BJ (cell line): ENCODE measurements at regions of chr18 and their contacts with region 1.

Region 1: DNA sequence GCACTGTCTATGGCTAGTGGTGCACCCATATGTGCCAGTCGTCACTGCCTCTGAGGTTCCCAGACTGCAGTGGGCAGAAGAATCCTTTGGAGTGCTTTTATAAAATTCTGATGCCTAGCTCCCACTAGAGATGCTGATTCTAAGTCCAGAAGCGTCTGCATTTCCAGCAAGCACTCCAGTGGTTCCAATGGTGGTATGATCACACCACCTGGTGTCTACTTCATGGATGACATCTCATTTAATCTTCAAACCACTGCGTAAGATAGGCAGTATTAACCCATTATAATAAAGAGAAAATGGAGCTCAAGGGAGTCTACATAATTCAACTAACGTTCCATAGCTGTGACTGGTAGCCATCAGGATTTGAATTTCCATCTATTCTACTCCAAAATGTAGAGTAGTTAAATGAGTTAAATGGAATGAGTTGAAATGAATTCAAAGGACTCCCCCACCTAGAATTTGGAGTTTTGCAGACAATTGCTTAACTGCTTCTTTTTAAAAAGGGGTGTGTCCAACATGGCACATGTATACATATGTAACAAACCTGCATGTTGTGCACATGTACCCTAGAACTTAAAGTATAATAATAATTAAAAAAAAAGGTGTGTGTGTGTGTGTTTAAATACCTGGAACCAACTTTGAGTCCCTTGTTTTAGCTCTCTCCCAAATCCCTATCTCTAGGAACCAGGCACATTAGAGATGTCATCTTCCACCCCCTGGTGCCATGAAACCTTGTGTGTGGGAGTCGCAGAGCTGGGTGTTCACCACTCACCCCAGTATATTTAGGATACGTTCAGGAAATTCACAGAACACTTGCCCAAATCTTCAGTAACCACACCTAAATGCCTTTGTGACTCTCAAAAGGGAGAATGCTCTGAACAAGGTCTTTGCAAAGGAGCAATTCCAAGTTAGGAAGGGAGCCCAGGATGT is 14.1 kb downstream of the LAMA3 start:
- DNase-seq: no peak
- H3K4me3 ChIP-seq: no peak overlapping the region
- H3K27me3 ChIP-seq: no peaks in the 10 kb centered on the region; the same call in 1 of the 2 replicates
- CTCF ChIP-seq: peak; percentile 62

Region 2: DNA sequence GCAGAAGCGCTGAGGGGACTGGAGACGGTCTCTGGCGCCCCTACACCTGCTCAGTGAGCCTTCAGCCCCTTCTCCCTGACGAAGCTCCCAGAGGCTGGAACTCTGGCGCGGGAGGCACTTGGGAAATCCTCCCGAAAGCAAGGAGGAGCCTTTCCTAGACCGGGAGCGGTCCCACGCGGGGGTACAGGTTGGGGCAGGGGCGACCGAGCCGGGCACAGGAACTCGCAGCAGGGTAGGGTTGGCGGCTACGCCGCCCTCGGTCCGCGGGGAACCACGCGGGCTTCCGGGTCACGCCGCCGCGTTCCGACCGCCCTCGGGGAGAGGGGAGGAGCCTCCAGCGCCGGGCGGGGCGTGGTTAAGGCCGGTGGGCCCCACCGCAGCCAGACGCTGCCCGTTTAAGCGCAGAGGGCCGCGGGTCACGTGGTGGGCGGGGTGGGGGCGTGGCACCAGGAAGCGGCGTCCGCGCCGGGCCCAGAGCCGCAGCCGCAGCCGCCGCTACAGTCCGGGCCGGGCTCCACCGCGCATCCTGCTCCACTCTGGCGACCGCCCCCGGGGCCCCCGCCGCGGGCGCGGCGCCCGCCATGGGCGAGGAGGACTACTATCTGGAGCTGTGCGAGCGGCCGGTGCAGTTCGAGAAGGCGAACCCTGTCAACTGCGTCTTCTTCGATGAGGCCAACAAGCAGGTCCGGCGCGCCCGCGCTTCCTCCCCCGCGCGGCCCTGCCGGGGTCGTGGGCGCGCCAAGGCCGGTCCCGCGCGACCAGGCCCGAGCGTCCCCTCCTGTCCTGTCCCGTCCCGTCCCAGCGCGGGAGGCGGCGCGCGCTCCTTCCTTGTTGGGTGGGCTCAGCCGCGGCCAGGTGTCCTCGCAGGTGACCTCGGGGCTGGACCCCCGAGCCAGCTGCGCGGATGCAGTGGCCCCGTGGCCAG is 200.0 kb before region 1 on chr18 and contains the start of gene RMC1:
- CTCF ChIA-PET with region 1: interaction called, 45 read pairs
- POLR2A ChIA-PET with region 1: no interaction called
- DNase-seq: no peak
- H3K4me3 ChIP-seq: peak within 1 kb of the TSS; percentile 91
- H3K27me3 ChIP-seq: no peaks in the 10 kb centered on the region
- CTCF ChIP-seq: no peak
- polyA plus RNA-seq, gene RMC1: 10.8 and 15.1 TPM in 2 replicates

Region 3: DNA sequence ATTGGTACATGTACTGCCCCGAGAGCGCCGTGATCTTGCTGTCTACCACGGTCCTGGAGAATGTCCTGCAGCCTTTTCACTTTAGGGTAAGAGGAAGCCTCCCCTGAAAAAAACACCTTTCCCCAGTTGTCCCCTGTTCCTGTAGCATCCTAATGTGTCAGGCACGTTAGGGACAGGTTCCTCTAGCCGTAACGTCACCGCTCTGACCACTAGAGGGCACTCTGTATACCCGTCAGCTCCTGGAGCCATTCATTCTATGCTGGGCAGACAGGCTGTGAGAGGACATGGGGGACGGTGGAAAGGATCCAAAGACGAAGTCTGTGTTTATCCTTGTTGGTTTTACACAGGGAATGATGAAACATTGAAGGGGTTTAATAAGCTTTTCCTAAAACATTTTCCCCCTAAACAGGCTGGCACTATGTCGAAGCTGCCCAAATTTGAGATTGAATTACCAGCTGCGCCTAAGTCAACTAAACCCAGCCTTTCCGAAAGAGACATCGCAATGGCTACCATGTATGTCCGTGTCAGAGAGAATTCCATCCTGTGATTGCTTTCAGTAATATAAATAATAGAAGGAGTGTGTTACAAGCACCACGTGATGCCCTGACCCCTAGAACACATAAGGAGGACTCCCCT is 187.3 kb before region 1 on chr18:
- CTCF ChIA-PET with region 1: interaction called, 24 read pairs
- POLR2A ChIA-PET with region 1: no interaction called
- DNase-seq: no peak
- H3K4me3 ChIP-seq: no peak overlapping the region
- H3K27me3 ChIP-seq: no peaks in the 10 kb centered on the region
- CTCF ChIP-seq: peak; percentile 95

Region 4: DNA sequence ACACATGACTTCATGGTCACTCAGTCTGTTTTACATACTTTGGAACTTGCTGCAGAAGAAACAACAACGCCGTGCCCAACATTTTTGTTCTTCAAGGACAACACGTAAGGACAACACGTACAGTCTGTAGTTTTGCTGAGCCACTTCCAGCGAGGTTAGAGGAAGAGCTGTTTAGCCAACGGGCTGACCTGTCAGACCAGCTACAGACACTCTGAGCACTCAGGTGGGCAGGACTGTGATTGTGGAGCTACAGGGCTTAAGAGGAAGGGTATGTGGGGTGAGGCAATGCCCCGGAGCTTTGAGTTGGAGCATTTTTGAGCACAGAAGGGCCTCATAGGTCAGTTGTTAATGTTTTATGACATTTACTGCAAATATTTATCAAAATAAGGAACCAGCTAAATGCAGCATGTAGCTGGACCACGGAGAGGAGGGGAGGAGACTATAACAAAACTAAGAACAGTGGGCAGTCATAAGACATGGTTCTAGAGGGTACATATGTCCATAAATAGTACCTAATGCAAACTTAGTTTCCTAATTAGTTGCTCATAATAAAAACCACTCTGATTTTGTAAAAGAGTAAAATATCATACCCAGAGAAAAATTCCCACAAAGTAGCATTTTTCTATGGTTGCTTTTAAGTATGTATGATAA is 90.8 kb before region 1 on chr18:
- CTCF ChIA-PET with region 1: interaction called, 102 read pairs
- POLR2A ChIA-PET with region 1: no interaction called
- DNase-seq: no peak
- H3K4me3 ChIP-seq: no peak overlapping the region
- H3K27me3 ChIP-seq: no peaks in the 10 kb centered on the region
- CTCF ChIP-seq: no peak

Region 5: DNA sequence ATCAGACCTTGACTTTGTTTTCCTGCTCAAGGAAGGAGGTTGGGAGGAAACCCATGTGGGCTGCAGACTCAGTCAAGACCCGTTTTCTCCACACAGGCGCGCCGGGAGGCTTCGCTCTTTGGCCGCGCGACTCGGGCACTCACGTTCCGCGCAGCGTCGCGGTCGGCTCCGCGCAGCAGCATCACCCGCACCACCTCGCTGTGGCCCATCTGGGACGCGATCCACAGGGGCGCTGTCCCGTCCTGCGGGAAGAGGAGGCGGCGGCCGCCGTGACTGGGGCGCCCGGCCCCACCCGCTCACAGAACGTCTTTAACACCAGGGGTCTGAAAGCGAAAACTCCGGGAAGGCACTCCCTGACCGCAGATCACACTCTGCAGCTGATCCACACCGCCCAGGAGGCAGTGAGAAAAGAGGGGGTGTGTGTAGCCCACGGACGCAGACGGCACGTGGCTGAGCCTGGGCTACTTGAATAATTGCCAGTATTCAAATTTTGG is 83.9 kb before region 1 on chr18:
- CTCF ChIA-PET with region 1: interaction called, 102 read pairs
- POLR2A ChIA-PET with region 1: no interaction called
- DNase-seq: no peak
- H3K4me3 ChIP-seq: peak overlapping the region; percentile 40
- H3K27me3 ChIP-seq: peaks cover 2% of the 10 kb centered on the region
- CTCF ChIP-seq: peak; percentile 21; the same call in 1 of the 2 replicates

Region 6: GRCh38 chr18:23719634-23720201 is 16.4 kb after region 1 on chr18:
- CTCF ChIA-PET with region 1: interaction called, 12 read pairs
- POLR2A ChIA-PET with region 1: no interaction called
- DNase-seq: peak; percentile 98
- H3K4me3 ChIP-seq: no peak overlapping the region
- H3K27me3 ChIP-seq: no peaks in the 10 kb centered on the region
- CTCF ChIP-seq: no peak

Region 7: DNA sequence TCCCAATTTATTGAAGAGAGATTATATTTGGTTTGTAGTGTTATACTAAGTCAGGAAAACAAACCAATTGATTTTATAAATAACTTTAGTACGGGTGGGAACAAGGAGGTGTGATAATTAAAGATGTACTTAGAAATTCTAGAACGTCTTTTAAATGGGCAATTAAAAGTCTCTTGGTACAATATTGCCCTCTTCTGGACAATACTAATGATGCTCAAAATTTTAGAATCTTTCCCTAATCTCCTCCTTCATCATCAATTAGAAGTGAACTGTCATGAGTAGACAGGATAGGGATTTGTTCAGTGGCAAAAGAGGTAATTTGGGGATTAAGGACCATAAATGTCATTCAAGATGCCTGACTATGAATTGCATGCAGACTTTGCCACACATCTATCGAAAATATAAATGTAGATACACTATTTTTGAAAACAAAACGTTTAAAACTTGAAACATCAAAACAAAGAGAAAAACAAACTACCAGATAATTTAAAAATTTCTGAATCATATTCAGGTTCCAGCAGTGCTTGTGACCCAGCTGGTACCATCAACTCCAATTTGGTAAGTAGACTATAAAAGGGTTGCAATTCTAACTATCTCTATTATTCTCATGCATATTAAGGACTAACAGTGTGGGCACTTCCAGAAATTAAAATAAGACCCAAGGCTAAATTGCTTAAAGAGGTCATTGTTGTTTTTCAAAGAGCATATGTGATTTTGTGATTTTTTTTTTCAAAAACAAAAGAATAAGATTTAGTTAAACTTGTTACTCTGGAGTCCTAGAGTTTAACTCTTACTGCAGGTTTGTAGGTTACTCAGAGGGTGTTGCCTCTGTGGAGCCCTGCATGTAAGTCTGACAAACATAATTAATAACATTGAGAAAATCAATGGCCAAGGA is 109.5 kb after region 1 on chr18:
- CTCF ChIA-PET with region 1: interaction called, 22 read pairs
- POLR2A ChIA-PET with region 1: no interaction called
- DNase-seq: no peak
- H3K4me3 ChIP-seq: no peak overlapping the region
- H3K27me3 ChIP-seq: no peaks in the 10 kb centered on the region
- CTCF ChIP-seq: peak; percentile 55

Region 8: DNA sequence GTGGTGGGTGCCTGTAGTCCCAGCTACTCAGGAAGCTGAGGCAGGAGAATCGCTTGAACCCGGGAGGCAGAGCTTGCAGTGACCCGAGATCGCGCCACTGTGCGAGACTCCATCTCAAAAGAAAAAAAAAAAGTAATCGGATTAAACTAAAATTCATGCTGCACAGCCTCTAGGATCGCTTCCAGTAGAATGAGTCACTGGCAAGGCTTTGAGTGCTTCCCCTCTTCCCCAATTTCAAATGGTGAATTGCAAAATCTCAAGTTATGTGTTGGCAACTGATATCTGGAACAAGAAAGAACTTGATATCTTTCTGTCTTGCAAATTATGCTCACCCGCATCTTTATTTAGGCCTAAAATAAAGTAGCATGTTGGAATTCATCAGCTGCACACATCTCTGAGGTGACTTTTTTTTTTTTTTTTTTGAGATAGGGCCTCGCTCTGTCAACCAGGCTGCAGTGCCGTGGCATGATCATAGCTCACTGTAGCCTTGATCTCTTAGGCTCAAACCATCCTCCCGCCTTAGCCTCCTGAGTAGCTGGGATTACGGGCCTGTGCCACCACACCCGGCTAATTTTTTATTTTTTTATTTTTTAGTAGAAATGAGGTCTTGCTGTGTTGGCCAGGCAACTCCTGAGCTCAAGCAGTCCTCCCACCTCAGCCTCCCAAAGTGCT is 324.0 kb after region 1 on chr18:
- CTCF ChIA-PET with region 1: no interaction called
- POLR2A ChIA-PET with region 1: no interaction called
- DNase-seq: peak; percentile 57
- H3K4me3 ChIP-seq: no peak overlapping the region
- H3K27me3 ChIP-seq: no peaks in the 10 kb centered on the region
- CTCF ChIP-seq: no peak